CD4-positive, alpha-beta memory T cell (primary cell): ENCODE measurements at regions of chr2 and their contacts with region 1.

Region 1: GRCh38 chr2:241637000-241637791 is at the starts of genes ATG4B and THAP4:
- DNase-seq: peak; percentile 73 to 89 (median 78)
- H3K4me3 ChIP-seq: peak within 1 kb of the TSS; percentile 65 to 90
- H3K4me3 Mint-ChIP-seq: peak within 1 kb of the TSS; percentile 86 to 98 (median 94)
- H3K27ac ChIP-seq: peak within 1 kb of the TSS; percentile 88
- H3K27ac Mint-ChIP-seq: peak within 1 kb of the TSS; percentile 82 to 98 (median 93)
- H3K4me1 ChIP-seq: peaks cover 35% of the 10 kb centered on the region
- H3K4me1 Mint-ChIP-seq: peaks cover 36 to 71% (median 48%) of the 10 kb centered on the region in 4 donors
- H3K27me3 ChIP-seq: no peaks in the 10 kb centered on the region
- H3K27me3 Mint-ChIP-seq: no peaks in the 10 kb centered on the region
- total RNA-seq, gene ATG4B: 87.7 to 96.9 TPM
- total RNA-seq, gene THAP4: 27.8 to 28.2 TPM

Region 2: DNA sequence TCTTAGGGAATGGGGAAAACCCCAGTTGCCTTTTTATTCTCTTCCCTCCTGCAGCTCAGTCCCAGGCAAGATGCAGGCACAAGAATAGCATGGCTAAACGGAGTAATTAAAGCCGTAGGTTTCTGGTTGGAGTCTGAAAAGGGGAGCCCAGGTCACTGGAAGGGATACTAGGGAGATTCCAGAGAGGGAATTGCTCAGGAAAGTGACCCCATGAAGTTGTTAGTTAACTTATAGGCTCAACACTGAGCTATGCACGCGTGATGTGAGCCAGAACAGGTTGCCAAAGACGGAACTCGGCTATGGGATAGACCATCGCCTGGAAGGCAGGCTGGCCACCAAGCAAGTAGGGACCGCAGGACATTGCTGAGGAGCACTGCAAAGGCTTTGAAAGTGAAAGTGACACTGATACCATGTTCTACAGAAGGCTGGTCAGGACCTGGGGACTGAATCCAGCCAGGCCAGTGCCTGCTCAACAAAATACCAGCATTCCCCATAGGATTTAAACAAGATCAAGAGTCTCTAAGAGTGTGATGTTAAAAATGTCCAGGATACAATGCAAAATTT is 273.8 kb before region 1 on chr2:
- CTCF ChIA-PET with region 1: no interaction called
- POLR2A ChIA-PET with region 1: no interaction called
- intact Hi-C with region 1: no loop called
- DNase-seq: no peak
- H3K4me3 ChIP-seq: no peak overlapping the region
- H3K4me3 Mint-ChIP-seq: no peak overlapping the region
- H3K27ac ChIP-seq: no peak overlapping the region
- H3K27ac Mint-ChIP-seq: peak overlapping the region in 1 of 7 donors; percentile 26
- H3K4me1 ChIP-seq: no peaks in the 10 kb centered on the region
- H3K4me1 Mint-ChIP-seq: peaks cover under 1 to 14% (median 5%) of the 10 kb centered on the region in 4 donors
- H3K27me3 ChIP-seq: no peaks in the 10 kb centered on the region
- H3K27me3 Mint-ChIP-seq: no peaks in the 10 kb centered on the region

Region 3: GRCh38 chr2:241609859-241610793 is 27.1 kb before region 1 on chr2:
- CTCF ChIA-PET with region 1: no interaction called
- POLR2A ChIA-PET with region 1: interaction called, 3 read pairs
- intact Hi-C with region 1: loop called (anchors 1 kb)
- DNase-seq: peak; percentile 89 to 91 (median 90)
- H3K4me3 ChIP-seq: peak overlapping the region; percentile 6 to 11
- H3K4me3 Mint-ChIP-seq: peak overlapping the region; percentile 42 to 81 (median 70)
- H3K27ac ChIP-seq: peak overlapping the region; percentile 50
- H3K27ac Mint-ChIP-seq: peak overlapping the region; percentile 61 to 95 (median 73)
- H3K4me1 ChIP-seq: peaks cover 18% of the 10 kb centered on the region
- H3K4me1 Mint-ChIP-seq: peaks cover 12 to 21% (median 18%) of the 10 kb centered on the region in 4 donors
- H3K27me3 ChIP-seq: no peaks in the 10 kb centered on the region
- H3K27me3 Mint-ChIP-seq: no peaks in the 10 kb centered on the region

Region 4: DNA sequence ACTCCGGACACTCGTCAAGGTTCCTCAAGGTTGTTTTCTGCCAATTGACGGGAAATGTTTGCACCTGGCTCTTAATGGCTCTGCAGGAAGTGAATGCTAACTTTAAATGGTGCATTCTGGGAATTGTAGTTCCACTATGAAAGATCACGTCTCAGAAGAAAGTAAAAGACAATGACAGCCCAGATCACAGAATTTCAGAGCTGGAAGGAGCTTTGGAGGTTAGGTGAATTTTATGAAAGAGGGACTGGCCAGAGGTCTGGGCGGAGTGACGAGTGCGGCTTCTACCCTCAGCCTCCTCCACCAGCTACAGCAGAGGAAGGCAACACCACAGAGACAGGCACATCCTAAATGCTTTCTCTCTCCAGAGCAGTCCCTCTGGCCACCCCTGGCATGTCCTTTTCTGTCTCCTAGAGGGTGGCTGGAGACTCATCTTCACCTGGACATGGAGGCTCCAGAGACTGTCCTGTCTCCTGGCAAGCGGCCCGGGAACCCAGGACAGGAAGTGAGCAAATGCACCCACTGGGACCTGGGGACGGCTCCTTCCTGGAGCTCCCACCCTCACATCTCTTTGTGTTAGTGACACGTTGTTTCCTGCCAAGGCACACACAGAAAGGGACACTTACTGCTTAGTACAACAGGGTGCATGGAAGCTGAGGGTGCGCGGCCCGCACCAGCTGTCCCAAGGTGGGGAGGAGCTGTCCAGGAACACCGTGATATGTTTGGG is 19.6 kb before region 1 on chr2:
- CTCF ChIA-PET with region 1: no interaction called
- POLR2A ChIA-PET with region 1: interaction called, 20 read pairs
- intact Hi-C with region 1: no loop called
- DNase-seq: peak; percentile 52 to 65 (median 59)
- H3K4me3 ChIP-seq: peak overlapping the region; percentile 54 to 67
- H3K4me3 Mint-ChIP-seq: peak overlapping the region; percentile 85 to 96 (median 90)
- H3K27ac ChIP-seq: peak overlapping the region; percentile 55
- H3K27ac Mint-ChIP-seq: peak overlapping the region; percentile 74 to 95 (median 90)
- H3K4me1 ChIP-seq: peaks cover 29% of the 10 kb centered on the region
- H3K4me1 Mint-ChIP-seq: peaks cover 22 to 44% (median 30%) of the 10 kb centered on the region in 4 donors
- H3K27me3 ChIP-seq: no peaks in the 10 kb centered on the region
- H3K27me3 Mint-ChIP-seq: no peaks in the 10 kb centered on the region

Region 5: DNA sequence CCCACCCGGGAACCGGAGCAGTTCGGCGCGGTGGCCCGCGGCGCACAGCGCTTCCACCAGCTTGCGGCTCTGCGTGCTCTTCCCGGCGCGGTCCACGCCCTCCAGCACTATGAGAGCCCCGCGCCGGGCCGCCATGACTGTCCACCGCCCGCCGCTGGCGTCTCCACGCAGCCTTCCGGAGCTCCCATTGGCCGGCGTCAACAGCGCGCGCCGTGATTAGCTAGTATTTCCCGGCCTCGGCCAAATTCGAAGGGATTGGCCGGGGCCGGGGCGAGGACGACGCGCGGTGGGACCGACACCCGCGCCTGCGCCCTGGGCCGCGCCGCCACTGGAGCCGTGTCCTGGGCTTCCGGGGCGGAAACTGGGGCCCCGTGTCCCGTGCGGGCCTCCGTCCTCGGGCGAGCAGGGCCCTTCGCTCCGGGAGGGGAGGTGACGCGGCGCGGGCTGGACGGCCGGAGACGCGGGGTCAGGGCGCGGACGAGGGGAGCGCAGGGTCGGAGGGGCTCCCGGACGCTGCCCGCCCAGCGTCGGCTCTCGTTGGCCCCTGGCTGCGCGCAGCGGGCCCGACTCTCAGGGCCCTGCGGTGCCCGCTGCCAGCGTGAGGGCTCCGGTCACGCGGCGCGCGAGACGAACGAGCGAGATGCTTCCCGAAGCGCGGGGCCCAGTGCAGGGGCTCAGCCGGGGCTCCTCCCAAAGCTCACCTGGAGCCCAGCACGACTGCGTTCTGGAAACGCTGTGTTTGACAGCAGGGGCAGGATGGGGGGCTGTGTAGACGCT is 49.6 kb after region 1 on chr2 and contains the start of gene DTYMK:
- CTCF ChIA-PET with region 1: interaction called, 3 read pairs
- POLR2A ChIA-PET with region 1: interaction called, 19 read pairs
- intact Hi-C with region 1: loop called (anchors 1 kb)
- DNase-seq: peak; percentile 95 to 98 (median 97)
- H3K4me3 ChIP-seq: peak within 1 kb of the TSS; percentile 57 to 89
- H3K4me3 Mint-ChIP-seq: peak within 1 kb of the TSS; percentile 87 to 96 (median 94)
- H3K27ac ChIP-seq: peak within 1 kb of the TSS; percentile 80
- H3K27ac Mint-ChIP-seq: peak within 1 kb of the TSS; percentile 85 to 93 (median 91)
- H3K4me1 ChIP-seq: peaks cover 32% of the 10 kb centered on the region
- H3K4me1 Mint-ChIP-seq: peaks cover 14 to 40% (median 26%) of the 10 kb centered on the region in 4 donors
- H3K27me3 ChIP-seq: no peaks in the 10 kb centered on the region
- H3K27me3 Mint-ChIP-seq: no peaks in the 10 kb centered on the region
- total RNA-seq, gene DTYMK: 18.8 TPM